ENCODE measurements at regions of chr12 and their contacts with region 1.

Region 1: DNA sequence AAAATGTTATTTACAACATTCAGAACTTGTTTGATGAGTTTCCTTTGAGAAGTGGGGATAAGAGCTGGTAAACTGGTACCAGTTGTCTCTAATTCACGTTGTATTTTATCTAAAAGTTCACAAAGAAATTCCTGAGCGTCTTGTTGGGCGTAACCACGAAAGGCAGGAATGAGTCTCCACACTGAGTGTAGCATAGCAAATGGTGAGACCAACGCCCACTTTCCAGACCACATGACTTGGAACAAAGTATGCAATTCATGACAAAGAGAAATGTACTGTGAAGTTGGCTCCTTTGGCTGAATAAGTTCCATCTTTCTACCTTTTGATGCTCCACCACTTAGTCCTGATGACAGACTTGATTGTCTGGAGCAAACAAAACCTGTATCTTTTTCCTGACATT is 18.4 kb downstream of the USP44 start:
- DNase-seq: no peak
- H3K4me3 ChIP-seq: no peak overlapping the region
- H3K27ac ChIP-seq: no peak overlapping the region
- H3K4me1 ChIP-seq: peaks cover 0 to 18% (median 0%) of the 10 kb centered on the region in 4 donors
- H3K27me3 ChIP-seq: no peaks in the 10 kb centered on the region
- CTCF ChIP-seq: no peak
- EP300 ChIP-seq: no peak
- POLR2A ChIP-seq: no peak

Region 2: GRCh38 chr12:95117178-95117599 is 415.7 kb before region 1 on chr12:
- in situ Hi-C with region 1: loop called (anchors 10 kb)
- intact Hi-C with region 1: loop called (anchors 10 kb)
- DNase-seq: peak; percentile 66
- H3K4me3 ChIP-seq: no peak overlapping the region
- H3K27ac ChIP-seq: peak overlapping the region; percentile 30 to 60 (median 52)
- H3K4me1 ChIP-seq: peaks cover 0 to 25% (median 13%) of the 10 kb centered on the region in 4 donors
- H3K27me3 ChIP-seq: no peaks in the 10 kb centered on the region
- CTCF ChIP-seq: peak; percentile 66 to 87 (median 78)
- EP300 ChIP-seq: no peak
- POLR2A ChIP-seq: no peak

Region 3: GRCh38 chr12:95124106-95124505 is 408.7 kb before region 1 on chr12:
- in situ Hi-C with region 1: loop called (anchors 10 kb)
- intact Hi-C with region 1: loop called (anchors 10 kb)
- DNase-seq: peak; percentile 28
- H3K4me3 ChIP-seq: no peak overlapping the region
- H3K27ac ChIP-seq: peak overlapping the region; percentile 24 to 73 (median 51)
- H3K4me1 ChIP-seq: peaks cover 0 to 13% (median 8%) of the 10 kb centered on the region in 4 donors
- H3K27me3 ChIP-seq: no peaks in the 10 kb centered on the region
- CTCF ChIP-seq: no peak
- EP300 ChIP-seq: no peak
- POLR2A ChIP-seq: no peak

Region 4: DNA sequence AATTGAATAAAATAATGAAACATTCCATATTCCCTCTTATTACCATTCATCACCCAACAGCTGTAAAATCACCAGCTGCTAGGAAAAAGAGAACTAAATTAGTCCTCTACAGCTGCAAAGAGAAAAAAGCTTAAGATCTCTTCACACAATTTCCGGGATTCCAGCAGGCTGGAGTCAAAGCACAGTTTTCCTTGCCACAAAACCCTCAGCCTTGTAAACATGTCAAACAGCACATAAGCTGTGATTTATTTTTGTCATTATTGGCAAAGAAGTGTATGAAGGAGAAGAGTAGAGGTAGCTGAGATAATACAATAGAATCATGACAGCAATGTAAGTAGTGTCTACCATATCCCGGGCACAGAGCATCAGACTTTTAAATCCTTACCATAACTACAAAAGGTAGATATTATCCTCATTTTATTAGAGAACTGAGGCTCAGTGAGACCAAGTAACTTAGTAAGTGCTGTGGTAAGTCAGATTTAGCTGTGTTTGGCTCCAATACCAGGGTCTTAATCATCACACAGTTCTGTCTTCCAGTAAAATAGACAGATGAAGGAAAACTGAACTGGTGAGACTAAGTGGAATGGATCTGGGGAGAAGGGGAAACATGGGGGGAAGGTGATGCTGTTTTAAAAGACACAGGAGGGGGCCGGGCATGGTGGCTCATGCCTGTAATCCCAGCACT is 200.4 kb after region 1 on chr12:
- in situ Hi-C with region 1: no loop called
- intact Hi-C with region 1: no loop called
- DNase-seq: no peak
- H3K4me3 ChIP-seq: no peak overlapping the region
- H3K27ac ChIP-seq: peak overlapping the region; percentile 41 to 58 (median 54)
- H3K4me1 ChIP-seq: peaks cover 3 to 39% (median 16%) of the 10 kb centered on the region in 4 donors
- H3K27me3 ChIP-seq: no peaks in the 10 kb centered on the region
- CTCF ChIP-seq: no peak
- EP300 ChIP-seq: no peak
- POLR2A ChIP-seq: no peak

Measured in transverse colon (tissue), 4 donors.